ENCODE measurements at regions of chr6 and their contacts with region 1.

Region 1: DNA sequence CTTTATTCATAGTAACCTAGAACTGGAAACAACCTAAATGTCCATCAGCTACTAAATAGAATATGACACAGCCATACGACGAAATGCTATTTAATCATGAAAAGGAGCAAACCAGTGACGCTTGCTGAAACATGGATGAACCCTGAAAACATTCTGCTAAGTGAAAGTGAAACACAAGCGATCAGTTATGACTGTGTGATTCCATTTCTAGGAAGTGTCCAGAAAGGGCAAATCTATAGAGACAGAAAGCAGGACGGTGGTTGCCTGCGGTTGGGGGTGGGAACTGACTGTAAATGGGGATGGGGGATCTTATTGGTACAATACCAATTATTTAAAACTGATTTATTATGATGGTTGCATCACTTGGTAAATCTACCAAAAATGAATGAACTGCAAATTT is 126.8 kb downstream of the IPCEF1 start:
- DNase-seq: no peak
- ATAC-seq: no peak
- H3K4me3 ChIP-seq: peak overlapping the region in 1 of 10 donors; percentile 29
- H3K27ac ChIP-seq: peak overlapping the region in 1 of 10 donors; percentile 72
- H3K4me1 ChIP-seq: peaks cover 0 to 42% (median 0%) of the 10 kb centered on the region in 9 donors
- H3K27me3 ChIP-seq: no peaks in the 10 kb centered on the region
- CTCF ChIP-seq: no peak

Region 2: DNA sequence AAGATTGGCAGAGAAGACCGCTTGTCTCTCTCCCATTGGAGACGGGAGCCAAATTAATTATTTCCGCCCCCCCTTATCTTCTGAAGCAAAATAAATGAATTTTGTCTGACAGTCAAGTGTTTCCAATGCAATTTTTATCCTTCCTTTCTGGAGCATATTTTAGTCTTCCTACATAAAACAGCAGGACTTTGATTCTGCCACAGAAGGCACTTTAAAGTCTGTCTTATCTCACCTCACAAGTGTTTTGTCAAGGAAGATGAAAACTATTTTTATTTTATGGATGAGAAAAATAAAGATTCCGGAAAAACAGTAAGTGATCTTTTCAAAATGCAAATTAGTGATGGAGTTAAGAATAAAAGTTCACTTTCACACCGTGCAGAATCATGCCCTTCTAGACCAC is 50.4 kb before region 1 on chr6:
- intact Hi-C with region 1: loop called in 1 of 10 experiments (anchors 5 kb)
- DNase-seq: no peak
- ATAC-seq: no peak
- H3K4me3 ChIP-seq: no peak overlapping the region
- H3K27ac ChIP-seq: no peak overlapping the region
- H3K4me1 ChIP-seq: peaks cover 0 to 8% (median 0%) of the 10 kb centered on the region in 9 donors
- H3K27me3 ChIP-seq: no peaks in the 10 kb centered on the region
- CTCF ChIP-seq: no peak

Region 3: GRCh38 chr6:154218301-154218700 is 11.5 kb before region 1 on chr6:
- intact Hi-C with region 1: no loop called
- DNase-seq: no peak
- ATAC-seq: no peak
- H3K4me3 ChIP-seq: no peak overlapping the region
- H3K27ac ChIP-seq: peak overlapping the region in 1 of 10 donors; percentile 31
- H3K4me1 ChIP-seq: peaks cover 0 to 5% (median 0%) of the 10 kb centered on the region in 9 donors
- H3K27me3 ChIP-seq: no peaks in the 10 kb centered on the region
- CTCF ChIP-seq: no peak

Region 4: DNA sequence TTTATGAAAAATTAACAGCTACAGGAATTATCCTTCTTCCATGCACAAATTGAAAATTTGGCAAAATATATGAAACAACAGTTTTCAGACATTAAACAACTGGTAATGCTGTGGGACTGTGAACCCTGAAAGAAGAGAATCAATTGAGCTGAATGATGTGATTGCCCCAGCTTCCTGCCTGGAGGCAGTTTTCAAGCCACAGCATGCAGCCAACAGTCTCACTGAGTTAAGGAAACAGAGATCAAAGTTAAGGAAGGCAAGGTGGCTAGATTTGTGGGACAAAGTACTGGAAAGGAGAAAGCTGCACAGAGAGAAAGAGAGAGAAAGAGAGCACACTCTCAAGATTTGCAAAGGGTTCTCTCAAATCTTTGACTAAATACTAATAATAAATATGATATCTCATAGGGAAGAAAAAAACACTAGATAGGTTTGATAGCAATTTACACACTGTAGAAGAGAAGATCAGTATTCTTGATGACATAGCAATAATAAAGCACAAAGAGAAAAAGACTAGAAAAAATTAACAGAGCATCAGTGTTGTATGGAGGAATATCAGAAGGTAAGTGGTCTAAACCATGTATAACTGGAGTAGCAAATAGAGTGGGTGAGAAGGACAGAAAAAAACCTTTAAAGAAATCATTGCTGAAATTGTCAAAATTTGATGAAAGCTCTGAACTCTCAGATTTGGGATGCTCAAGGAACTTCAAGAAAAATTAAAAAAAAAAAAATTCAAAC is 350.8 kb after region 1 on chr6:
- intact Hi-C with region 1: loop called in 1 of 10 experiments (anchors 10 kb)
- DNase-seq: no peak
- ATAC-seq: no peak
- H3K4me3 ChIP-seq: no peak overlapping the region
- H3K27ac ChIP-seq: no peak overlapping the region
- H3K4me1 ChIP-seq: no peaks in the 10 kb centered on the region
- H3K27me3 ChIP-seq: no peaks in the 10 kb centered on the region
- CTCF ChIP-seq: no peak

Region 5: GRCh38 chr6:156167016-156167624 is 1937.3 kb after region 1 on chr6:
- intact Hi-C with region 1: no loop called
- DNase-seq: peak in 1 of 2 donors; percentile 13
- ATAC-seq: peak; percentile 63 to 83 (median 72)
- H3K4me3 ChIP-seq: peak overlapping the region in 9 of 10 donors; percentile 5 to 45 (median 32)
- H3K27ac ChIP-seq: peak overlapping the region; percentile 17 to 86 (median 68)
- H3K4me1 ChIP-seq: peaks cover 0 to 54% (median 20%) of the 10 kb centered on the region in 9 donors
- H3K27me3 ChIP-seq: no peaks in the 10 kb centered on the region
- CTCF ChIP-seq: no peak

Measured in heart right ventricle (tissue), 16 donors.